ENCODE measurements at regions of chr22 and their contacts with region 1.

Region 1: GRCh38 chr22:43385770-43386641 is 25.8 kb upstream of the MPPED1 start:
- DNase-seq: peak; percentile 65
- ATAC-seq: peak; percentile 98
- H3K4me3 ChIP-seq: no peak overlapping the region
- H3K27ac ChIP-seq: no peak overlapping the region
- H3K4me1 ChIP-seq: no peaks in the 10 kb centered on the region; the same call in 1 of the 2 replicates
- H3K27me3 ChIP-seq: peaks cover 23% of the 10 kb centered on the region
- CTCF ChIP-seq: peak; percentile 93
- POLR2A ChIP-seq: peak; percentile 47; the same call in 1 of the 2 replicates
- RAD21 ChIP-seq: peak; percentile 97

Region 2: GRCh38 chr22:43273902-43274484 is 112.0 kb before region 1 on chr22:
- CTCF ChIA-PET with region 1: interaction called, 7 read pairs
- POLR2A ChIA-PET with region 1: no interaction called
- dilution Hi-C with region 1: no loop called
- in situ Hi-C with region 1: no loop called
- intact Hi-C with region 1: loop called (anchors 1 kb)
- DNase-seq: peak; percentile 46
- ATAC-seq: peak; percentile 87
- H3K4me3 ChIP-seq: no peak overlapping the region
- H3K27ac ChIP-seq: no peak overlapping the region
- H3K4me1 ChIP-seq: peaks cover 2% of the 10 kb centered on the region; the same call in 1 of the 2 replicates
- H3K27me3 ChIP-seq: peaks cover 22% of the 10 kb centered on the region
- CTCF ChIP-seq: peak; percentile 72
- POLR2A ChIP-seq: no peak
- RAD21 ChIP-seq: peak; percentile 76

Region 3: GRCh38 chr22:43826142-43827002 is 440.4 kb after region 1 on chr22:
- CTCF ChIA-PET with region 1: interaction called, 3 read pairs
- POLR2A ChIA-PET with region 1: no interaction called
- dilution Hi-C with region 1: no loop called
- in situ Hi-C with region 1: no loop called
- intact Hi-C with region 1: loop called (anchors 1 kb)
- DNase-seq: peak; percentile 81
- ATAC-seq: peak; percentile 70
- H3K4me3 ChIP-seq: no peak overlapping the region
- H3K27ac ChIP-seq: peak overlapping the region; percentile 33; the same call in 1 of the 2 replicates
- H3K4me1 ChIP-seq: peaks cover 44% of the 10 kb centered on the region
- H3K27me3 ChIP-seq: no peaks in the 10 kb centered on the region
- CTCF ChIP-seq: peak; percentile 45
- POLR2A ChIP-seq: no peak
- RAD21 ChIP-seq: peak; percentile 56

Region 4: GRCh38 chr22:43945632-43946383 is 559.8 kb after region 1 on chr22:
- CTCF ChIA-PET with region 1: no interaction called
- POLR2A ChIA-PET with region 1: no interaction called
- dilution Hi-C with region 1: no loop called
- in situ Hi-C with region 1: no loop called
- intact Hi-C with region 1: loop called (anchors 2 kb)
- DNase-seq: peak; percentile 59
- ATAC-seq: peak; percentile 100
- H3K4me3 ChIP-seq: no peak overlapping the region
- H3K27ac ChIP-seq: no peak overlapping the region
- H3K4me1 ChIP-seq: no peaks in the 10 kb centered on the region
- H3K27me3 ChIP-seq: no peaks in the 10 kb centered on the region
- CTCF ChIP-seq: peak; percentile 79
- POLR2A ChIP-seq: no peak
- RAD21 ChIP-seq: peak; percentile 72

Measured in IMR-90 (cell line).